OCI-LY7 (cell line): ENCODE measurements at regions of chr5 and their contacts with region 1.

Region 1: GRCh38 chr5:180699042-180699441 is 40.8 kb downstream of the OR2Y1 start:
- DNase-seq: no peak
- H3K4me3 ChIP-seq: no peak overlapping the region
- H3K27ac ChIP-seq: no peak overlapping the region
- H3K4me1 ChIP-seq: no peaks in the 10 kb centered on the region
- CTCF ChIP-seq: no peak

Region 2: GRCh38 chr5:180658774-180659564 is 40.1 kb before region 1 on chr5:
- CTCF ChIA-PET with region 1: no interaction called
- POLR2A ChIA-PET with region 1: interaction called, 12 read pairs
- intact Hi-C with region 1: no loop called
- DNase-seq: no peak
- H3K4me3 ChIP-seq: no peak overlapping the region
- H3K27ac ChIP-seq: no peak overlapping the region
- H3K4me1 ChIP-seq: no peaks in the 10 kb centered on the region
- CTCF ChIP-seq: no peak

Region 3: DNA sequence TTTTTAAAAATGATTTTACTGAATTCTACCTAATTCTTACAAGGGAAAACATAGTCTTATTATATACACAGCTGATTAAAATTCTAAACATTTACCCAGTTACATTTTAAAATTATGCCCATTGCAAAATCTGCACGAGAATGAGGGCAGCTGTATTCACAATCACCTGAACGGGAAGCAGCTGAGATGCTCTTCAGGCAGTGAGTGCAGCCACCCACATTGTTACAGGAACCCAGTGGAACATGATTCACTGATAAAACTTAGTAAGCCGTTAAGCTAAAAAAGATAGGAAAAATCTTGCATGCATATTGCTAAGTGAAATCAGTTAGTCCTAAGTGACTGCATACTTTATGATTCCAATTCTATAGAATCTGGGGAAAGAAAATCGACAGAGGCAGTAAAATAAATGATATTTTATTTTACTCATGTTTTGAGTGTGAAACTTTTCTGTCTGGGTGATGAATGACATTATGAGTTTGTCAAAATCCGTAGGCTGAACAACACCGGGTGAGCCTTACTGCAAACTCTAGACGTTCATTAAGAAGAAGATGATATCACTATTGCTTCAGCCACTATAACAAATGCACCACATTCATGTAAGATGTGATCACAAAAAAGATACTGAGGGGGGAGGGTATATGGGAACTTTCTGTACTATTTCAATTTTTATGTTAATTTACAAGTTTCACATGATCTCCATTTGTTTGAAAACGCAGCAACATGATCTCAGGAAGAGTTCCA is 10.5 kb before region 1 on chr5:
- CTCF ChIA-PET with region 1: no interaction called
- POLR2A ChIA-PET with region 1: no interaction called
- intact Hi-C with region 1: no loop called
- DNase-seq: no peak
- H3K4me3 ChIP-seq: no peak overlapping the region
- H3K27ac ChIP-seq: no peak overlapping the region
- H3K4me1 ChIP-seq: no peaks in the 10 kb centered on the region
- CTCF ChIP-seq: no peak

Region 4: DNA sequence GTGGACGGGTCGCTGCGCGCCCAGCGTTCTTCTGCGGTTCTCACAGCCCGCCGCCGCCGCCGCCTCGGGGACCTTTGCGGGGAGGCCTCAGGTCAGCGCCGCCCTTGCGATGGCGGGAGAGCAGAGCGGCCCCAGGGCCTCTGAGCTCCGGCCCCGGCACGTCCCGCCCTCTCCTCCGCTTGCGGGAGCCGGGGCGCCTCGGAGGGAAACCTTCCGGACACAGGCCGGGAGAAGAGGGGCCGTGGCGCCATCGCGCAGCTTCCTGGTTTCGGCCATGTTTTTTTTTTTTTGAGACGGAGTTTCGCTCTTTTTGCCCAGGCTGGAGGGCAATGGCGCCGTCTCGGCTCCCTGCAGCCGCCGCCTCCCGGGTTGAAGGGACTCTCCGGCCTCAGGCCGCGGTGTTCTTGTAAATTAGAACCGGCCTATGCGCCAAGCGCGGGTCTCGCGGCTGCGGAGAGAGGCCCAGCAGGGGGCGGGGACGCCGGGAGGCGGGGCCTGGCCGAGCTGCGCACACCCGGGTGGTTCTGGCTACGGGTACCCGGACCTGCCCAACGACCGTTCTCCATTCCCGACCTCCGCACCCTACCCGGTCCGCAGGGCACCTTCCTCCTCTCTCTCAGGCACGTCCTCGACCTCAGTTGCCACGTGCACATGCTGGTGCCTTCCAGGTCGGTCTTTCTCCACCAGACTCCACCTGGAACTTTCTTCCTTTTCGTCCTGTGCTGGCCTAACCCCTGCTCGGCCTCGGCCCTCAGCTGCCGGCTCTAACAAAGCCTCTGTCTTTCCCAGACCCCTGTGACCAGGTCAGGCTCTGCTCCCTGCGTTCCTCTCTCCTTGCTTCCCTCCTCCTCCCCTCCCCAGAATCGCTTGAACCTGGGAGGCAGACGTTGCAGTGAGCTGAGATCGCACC is 132.4 kb after region 1 on chr5:
- CTCF ChIA-PET with region 1: no interaction called
- POLR2A ChIA-PET with region 1: no interaction called
- intact Hi-C with region 1: no loop called
- DNase-seq: peak; percentile 82
- H3K4me3 ChIP-seq: peak overlapping the region; percentile 74
- H3K27ac ChIP-seq: peak overlapping the region; percentile 83
- H3K4me1 ChIP-seq: peaks cover 29% of the 10 kb centered on the region
- CTCF ChIP-seq: peak; percentile 28; the same call in 1 of the 2 replicates

Region 5: GRCh38 chr5:180844432-180844831 is 145.4 kb after region 1 on chr5:
- CTCF ChIA-PET with region 1: no interaction called
- POLR2A ChIA-PET with region 1: no interaction called
- intact Hi-C with region 1: no loop called
- DNase-seq: no peak
- H3K4me3 ChIP-seq: no peak overlapping the region
- H3K27ac ChIP-seq: no peak overlapping the region
- H3K4me1 ChIP-seq: peaks cover 3% of the 10 kb centered on the region
- CTCF ChIP-seq: no peak